ENCODE measurements at regions of chr16 and their contacts with region 1.

Region 1: GRCh38 chr16:23182460-23183309 is at the start of gene SCNN1G:
- DNase-seq: peak; percentile 95
- H3K4me3 ChIP-seq: peak within 1 kb of the TSS; percentile 40 to 48
- H3K27ac ChIP-seq: no peak within 1 kb of the TSS
- H3K4me1 ChIP-seq: peaks cover 0 to 15% of the 10 kb centered on the region in 2 experiments; a peak in 1 of 4 replicates
- H3K27me3 ChIP-seq: peaks cover 36% of the 10 kb centered on the region
- CTCF ChIP-seq: peak; percentile 71
- EP300 ChIP-seq: no peak
- RAD21 ChIP-seq: peak; percentile 79
- polyA plus RNA-seq, gene SCNN1G: not detected in 2 replicates

Region 2: GRCh38 chr16:23101012-23101550 is 81.6 kb before region 1 on chr16:
- CTCF ChIA-PET with region 1: no interaction called
- POLR2A ChIA-PET with region 1: no interaction called
- DNase-seq: no peak
- H3K4me3 ChIP-seq: no peak overlapping the region
- H3K27ac ChIP-seq: no peak overlapping the region
- H3K4me1 ChIP-seq: peaks cover 0 to 2% of the 10 kb centered on the region in 2 experiments; a peak in 1 of 4 replicates
- H3K27me3 ChIP-seq: no peaks in the 10 kb centered on the region
- CTCF ChIP-seq: no peak
- EP300 ChIP-seq: no peak
- RAD21 ChIP-seq: no peak

Region 3: GRCh38 chr16:23195366-23195978 is 12.8 kb after region 1 on chr16:
- CTCF ChIA-PET with region 1: interaction called, 29 read pairs
- POLR2A ChIA-PET with region 1: no interaction called
- DNase-seq: no peak
- H3K4me3 ChIP-seq: no peak overlapping the region
- H3K27ac ChIP-seq: no peak overlapping the region
- H3K4me1 ChIP-seq: no peaks in the 10 kb centered on the region
- H3K27me3 ChIP-seq: no peaks in the 10 kb centered on the region; the same call in 1 of the 2 replicates
- CTCF ChIP-seq: no peak
- EP300 ChIP-seq: no peak
- RAD21 ChIP-seq: no peak

Region 4: GRCh38 chr16:23207493-23207892 is 24.8 kb after region 1 on chr16:
- CTCF ChIA-PET with region 1: interaction called, 21 read pairs
- POLR2A ChIA-PET with region 1: no interaction called
- DNase-seq: peak; percentile 57
- H3K4me3 ChIP-seq: no peak overlapping the region
- H3K27ac ChIP-seq: peak overlapping the region in 1 of 2 experiments; percentile 78; a peak in 1 of 4 replicates
- H3K4me1 ChIP-seq: peaks cover 0 to 11% of the 10 kb centered on the region in 2 experiments; a peak in 1 of 4 replicates
- H3K27me3 ChIP-seq: no peaks in the 10 kb centered on the region; the same call in 1 of the 2 replicates
- CTCF ChIP-seq: no peak
- EP300 ChIP-seq: no peak
- RAD21 ChIP-seq: no peak

Region 5: DNA sequence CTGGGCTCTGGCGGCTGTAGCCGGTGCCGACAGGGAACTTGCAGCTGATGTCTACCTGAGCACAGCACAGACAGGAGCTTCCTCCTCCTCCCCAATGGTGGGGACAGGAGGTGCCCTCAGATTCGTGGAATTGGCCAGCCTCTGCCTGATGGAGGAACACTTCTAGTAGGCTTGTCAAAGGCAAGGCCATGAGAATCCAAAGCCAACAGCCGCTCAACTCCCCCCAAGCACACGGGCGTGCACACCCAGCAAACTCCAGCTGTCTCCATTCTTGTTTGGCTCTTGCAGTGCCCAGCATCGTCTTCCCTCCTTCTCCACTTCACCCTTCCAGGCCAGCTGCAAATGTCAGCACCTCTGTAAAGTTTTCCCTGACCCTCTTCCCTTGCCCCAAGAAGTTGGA is 35.0 kb after region 1 on chr16:
- CTCF ChIA-PET with region 1: interaction called, 12 read pairs
- POLR2A ChIA-PET with region 1: no interaction called
- DNase-seq: no peak
- H3K4me3 ChIP-seq: no peak overlapping the region
- H3K27ac ChIP-seq: no peak overlapping the region
- H3K4me1 ChIP-seq: no peaks in the 10 kb centered on the region
- H3K27me3 ChIP-seq: no peaks in the 10 kb centered on the region
- CTCF ChIP-seq: no peak
- EP300 ChIP-seq: no peak
- RAD21 ChIP-seq: no peak

Region 6: GRCh38 chr16:23391381-23392222 is 208.9 kb after region 1 on chr16:
- CTCF ChIA-PET with region 1: interaction called, 11 read pairs
- POLR2A ChIA-PET with region 1: no interaction called
- DNase-seq: no peak
- H3K4me3 ChIP-seq: no peak overlapping the region
- H3K27ac ChIP-seq: no peak overlapping the region
- H3K4me1 ChIP-seq: peaks cover 0 to 2% of the 10 kb centered on the region in 2 experiments; a peak in 1 of 4 replicates
- H3K27me3 ChIP-seq: no peaks in the 10 kb centered on the region
- CTCF ChIP-seq: no peak
- EP300 ChIP-seq: no peak
- RAD21 ChIP-seq: no peak

Region 7: DNA sequence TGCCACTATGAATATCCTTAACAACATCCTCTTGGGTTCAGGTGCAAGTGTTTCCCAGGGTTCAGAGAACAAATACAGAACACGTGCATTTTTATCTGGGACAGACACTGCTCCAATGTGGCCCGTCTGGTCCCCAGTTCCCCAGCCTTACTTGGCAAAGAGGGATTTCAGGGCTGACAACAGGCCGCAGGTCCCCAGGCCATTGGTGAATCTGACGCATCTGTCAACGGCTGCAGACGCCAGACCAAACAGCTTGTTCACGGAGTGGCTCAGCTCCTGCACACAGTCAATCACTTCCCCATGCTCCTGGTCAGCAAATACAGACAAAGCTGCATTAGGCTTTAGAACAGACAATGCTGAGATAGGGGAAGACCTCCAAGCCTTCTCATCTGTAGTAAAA is 234.1 kb after region 1 on chr16:
- CTCF ChIA-PET with region 1: interaction called, 12 read pairs
- POLR2A ChIA-PET with region 1: no interaction called
- DNase-seq: peak; percentile 45
- H3K4me3 ChIP-seq: no peak overlapping the region
- H3K27ac ChIP-seq: peak overlapping the region in 1 of 2 experiments; percentile 50; a peak in 2 of 4 replicates
- H3K4me1 ChIP-seq: peaks cover 0 to 3% of the 10 kb centered on the region in 2 experiments; a peak in 1 of 4 replicates
- H3K27me3 ChIP-seq: no peaks in the 10 kb centered on the region
- CTCF ChIP-seq: no peak
- EP300 ChIP-seq: no peak
- RAD21 ChIP-seq: no peak